ENCODE measurements at regions of chr16 and their contacts with region 1.

Region 1: GRCh38 chr16:30429678-30430427 is at the start of gene DCTPP1:
- DNase-seq: peak; percentile 92 to 97 (median 96)
- ATAC-seq: peak; percentile 97 to 99 (median 98)
- H3K4me3 ChIP-seq: peak within 1 kb of the TSS; percentile 66 to 71 (median 68)
- H3K27ac ChIP-seq: peak within 1 kb of the TSS; percentile 8 to 74 (median 36)
- H3K4me1 ChIP-seq: peaks cover 0 to 6% (median 0%) of the 10 kb centered on the region in 3 donors
- H3K27me3 ChIP-seq: no peaks in the 10 kb centered on the region
- CTCF ChIP-seq: peak; percentile 68 to 87 (median 81)
- total RNA-seq, gene DCTPP1: 12.2 to 20.7 (median 16.6) TPM

Region 2: GRCh38 chr16:30526823-30527635 is 97.2 kb after region 1 on chr16:
- intact Hi-C with region 1: loop called in 2 of 3 experiments (anchors 5 kb)
- DNase-seq: peak; percentile 97 to 100 (median 99)
- ATAC-seq: peak; percentile 87 to 97 (median 92)
- H3K4me3 ChIP-seq: peak overlapping the region; percentile 52 to 80 (median 64)
- H3K27ac ChIP-seq: peak overlapping the region; percentile 90 to 99 (median 96)
- H3K4me1 ChIP-seq: peaks cover 6 to 11% (median 7%) of the 10 kb centered on the region in 3 donors
- H3K27me3 ChIP-seq: no peaks in the 10 kb centered on the region
- CTCF ChIP-seq: peak in 1 of 4 donors; percentile 30

Region 3: DNA sequence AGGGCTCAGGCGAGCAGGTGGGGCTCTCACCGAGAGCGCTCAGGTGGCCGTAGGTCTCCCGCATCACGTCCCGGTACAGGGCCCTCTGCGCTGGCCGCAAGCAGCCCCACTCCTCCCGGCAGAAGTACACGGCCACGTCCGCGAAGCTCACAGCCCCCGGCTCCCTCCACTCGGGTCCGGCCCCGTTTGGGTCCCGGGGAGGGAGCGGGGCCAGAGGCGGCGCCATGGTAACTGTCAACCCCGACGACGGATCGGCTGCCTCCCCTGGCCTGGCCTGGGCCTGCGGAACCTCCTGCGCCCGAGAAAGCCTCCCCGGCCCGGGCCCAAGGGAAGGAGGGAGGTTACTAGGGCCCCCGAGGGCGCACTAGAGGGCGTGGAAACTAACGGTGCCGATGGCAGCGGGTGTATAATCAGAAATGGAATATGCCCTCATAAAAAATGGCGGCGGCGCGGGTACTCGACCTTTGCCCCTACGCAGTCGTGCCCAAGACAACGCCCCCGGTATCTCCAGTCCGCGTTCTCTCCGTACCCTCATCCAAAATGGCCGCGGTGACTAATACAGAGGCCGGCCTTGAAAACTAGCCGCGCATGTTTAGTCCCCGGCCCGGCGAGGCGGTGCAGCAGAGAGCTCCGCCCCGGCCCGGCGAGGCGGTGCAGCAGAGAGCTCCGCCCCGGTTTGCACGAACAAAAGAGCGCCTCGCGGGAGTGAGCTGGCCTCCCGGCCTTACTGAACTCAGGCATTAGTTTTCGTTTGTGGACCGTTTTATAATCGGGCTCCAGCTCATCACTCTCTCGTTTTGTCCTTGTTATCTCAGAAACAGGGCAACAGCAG is 128.3 kb after region 1 on chr16 and contains the start of gene ZNF764:
- intact Hi-C with region 1: no loop called
- DNase-seq: peak; percentile 95 to 99 (median 98)
- ATAC-seq: peak; percentile 93 to 98 (median 96)
- H3K4me3 ChIP-seq: peak within 1 kb of the TSS; percentile 65 to 90 (median 88)
- H3K27ac ChIP-seq: peak within 1 kb of the TSS; percentile 91 to 97 (median 96)
- H3K4me1 ChIP-seq: peaks cover 0 to 10% (median 0%) of the 10 kb centered on the region in 3 donors
- H3K27me3 ChIP-seq: no peaks in the 10 kb centered on the region
- CTCF ChIP-seq: no peak
- total RNA-seq, gene ZNF764: 3.1 to 5.6 (median 4.0) TPM